PC-3 (cell line): ENCODE measurements at regions of chr9 and their contacts with region 1.

Region 1: DNA sequence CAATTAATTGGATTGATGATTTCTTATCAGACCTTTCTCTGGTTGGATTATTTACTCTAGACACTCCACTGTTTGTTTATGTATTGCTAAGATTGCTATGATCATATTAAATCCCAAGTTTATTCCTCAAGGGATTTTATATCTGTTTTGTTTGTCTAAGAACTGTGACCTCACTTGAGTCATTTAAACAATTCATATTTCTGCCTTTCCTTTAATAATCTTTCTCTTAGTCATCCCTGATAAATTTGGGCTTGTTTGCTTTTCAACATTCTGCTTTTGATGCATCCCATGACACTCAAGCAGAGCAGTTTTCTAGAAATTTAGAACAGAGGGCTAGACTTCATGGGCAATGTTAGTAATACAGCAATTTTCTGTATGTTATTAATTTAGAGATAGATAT is 231.6 kb upstream of the TNC start:
- DNase-seq: peak; percentile 85
- ATAC-seq: peak; percentile 86
- H3K4me3 ChIP-seq: no peak overlapping the region
- H3K27ac ChIP-seq: peak overlapping the region; percentile 65
- H3K4me1 ChIP-seq: peaks cover 33% of the 10 kb centered on the region
- H3K27me3 ChIP-seq: no peaks in the 10 kb centered on the region
- CTCF ChIP-seq: no peak

Region 2: GRCh38 chr9:116155698-116156039 is 806.1 kb after region 1 on chr9:
- CTCF ChIA-PET with region 1: no interaction called
- POLR2A ChIA-PET with region 1: interaction called, 12 read pairs
- intact Hi-C with region 1: no loop called
- DNase-seq: no peak
- ATAC-seq: no peak
- H3K4me3 ChIP-seq: no peak overlapping the region
- H3K27ac ChIP-seq: no peak overlapping the region
- H3K4me1 ChIP-seq: peaks cover 19% of the 10 kb centered on the region
- H3K27me3 ChIP-seq: no peaks in the 10 kb centered on the region
- CTCF ChIP-seq: no peak